OCI-LY7 (cell line): ENCODE measurements at regions of chr22 and their contacts with region 1.

Region 1: GRCh38 chr22:23385291-23386244 is 194.5 kb downstream of the IGLL1 start:
- DNase-seq: peak; percentile 75
- H3K4me3 ChIP-seq: no peak overlapping the region
- H3K27ac ChIP-seq: no peak overlapping the region
- H3K4me1 ChIP-seq: no peaks in the 10 kb centered on the region
- CTCF ChIP-seq: peak; percentile 89

Region 2: GRCh38 chr22:23128269-23129108 is 257.1 kb before region 1 on chr22:
- CTCF ChIA-PET with region 1: no interaction called
- POLR2A ChIA-PET with region 1: no interaction called
- intact Hi-C with region 1: loop called (anchors 5 kb)
- DNase-seq: peak; percentile 87
- H3K4me3 ChIP-seq: no peak overlapping the region
- H3K27ac ChIP-seq: no peak overlapping the region
- H3K4me1 ChIP-seq: peaks cover 17% of the 10 kb centered on the region
- CTCF ChIP-seq: peak; percentile 97

Region 3: GRCh38 chr22:23315341-23315917 is 70.1 kb before region 1 on chr22:
- CTCF ChIA-PET with region 1: no interaction called
- POLR2A ChIA-PET with region 1: no interaction called
- intact Hi-C with region 1: loop called (anchors 2 kb)
- DNase-seq: peak; percentile 56
- H3K4me3 ChIP-seq: no peak overlapping the region
- H3K27ac ChIP-seq: no peak overlapping the region
- H3K4me1 ChIP-seq: no peaks in the 10 kb centered on the region
- CTCF ChIP-seq: peak; percentile 72